ENCODE measurements at regions of chr3 and their contacts with region 1.

Region 1: DNA sequence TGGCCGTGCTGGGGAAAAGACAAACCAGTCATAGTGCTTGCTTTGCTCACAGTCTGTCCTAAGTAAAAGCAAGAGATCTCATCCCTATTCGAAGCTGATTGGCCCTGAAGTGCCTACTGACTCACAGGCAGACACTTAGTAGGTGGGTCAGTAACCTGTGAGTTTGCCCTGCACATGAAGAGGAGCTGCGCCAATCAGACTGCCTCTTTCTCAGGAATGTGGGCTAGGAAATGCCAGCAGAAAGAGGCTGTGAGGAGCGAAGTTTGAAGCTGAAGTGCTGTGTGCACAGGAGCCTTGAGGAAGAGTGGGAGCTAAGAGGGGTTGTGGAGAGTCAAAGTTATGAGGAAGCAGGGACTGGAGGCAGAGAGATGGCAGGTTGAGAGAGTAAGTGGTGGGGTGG is 126.8 kb downstream of the IL20RB start:
- DNase-seq: no peak
- CTCF ChIP-seq: no peak

Region 2: GRCh38 chr3:137066092-137066491 is 18.5 kb before region 1 on chr3:
- CTCF ChIA-PET with region 1: no interaction called
- POLR2A ChIA-PET with region 1: no interaction called
- DNase-seq: no peak
- CTCF ChIP-seq: no peak

Region 3: GRCh38 chr3:137105277-137105977 is 20.8 kb after region 1 on chr3:
- CTCF ChIA-PET with region 1: interaction called, 11 read pairs
- POLR2A ChIA-PET with region 1: no interaction called
- DNase-seq: peak; percentile 47
- CTCF ChIP-seq: peak; percentile 71

Region 4: GRCh38 chr3:137474932-137475331 is 390.3 kb after region 1 on chr3:
- CTCF ChIA-PET with region 1: no interaction called
- POLR2A ChIA-PET with region 1: no interaction called
- DNase-seq: no peak
- CTCF ChIP-seq: no peak